ENCODE measurements at regions of chr2 and their contacts with region 1.

Region 1: DNA sequence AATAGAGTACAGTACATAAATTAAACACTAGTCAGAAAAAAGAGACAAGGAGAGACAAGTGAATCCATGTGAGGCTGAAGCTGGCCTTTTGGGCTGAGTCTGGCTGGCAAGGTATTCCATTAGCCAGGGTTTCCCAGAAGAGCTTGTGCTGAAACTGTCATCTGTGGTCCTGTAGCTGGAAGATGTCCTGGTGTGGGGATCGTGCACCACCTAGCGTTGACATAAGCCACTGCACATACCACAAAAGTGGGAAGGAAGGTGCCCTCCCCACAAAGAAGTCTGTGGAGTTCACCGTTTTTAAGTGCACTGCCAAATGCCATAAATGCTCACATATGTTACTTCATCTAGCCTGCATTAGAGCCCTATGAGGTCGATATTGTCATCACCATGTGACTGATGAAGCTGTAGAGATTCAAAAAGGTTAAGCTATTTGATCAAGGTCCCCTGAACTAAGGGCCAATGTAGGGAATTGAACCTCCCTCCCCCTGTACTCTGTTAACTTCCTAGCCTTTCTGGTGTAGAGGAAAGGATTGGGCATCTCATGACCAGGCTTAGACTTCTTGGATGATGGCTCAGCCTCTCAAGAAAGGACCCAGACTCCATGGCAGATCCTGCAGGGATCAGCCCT is 31.9 kb upstream of the GALNT14 start:
- DNase-seq: peak; percentile 60
- ATAC-seq: peak; percentile 94
- H3K4me3 ChIP-seq: no peak overlapping the region
- H3K27ac ChIP-seq: no peak overlapping the region
- H3K4me1 ChIP-seq: no peaks in the 10 kb centered on the region
- H3K27me3 ChIP-seq: peaks cover 2% of the 10 kb centered on the region
- CTCF ChIP-seq: peak; percentile 93

Region 2: GRCh38 chr2:30862054-30862651 is 308.0 kb before region 1 on chr2:
- CTCF ChIA-PET with region 1: interaction called, 3 read pairs
- POLR2A ChIA-PET with region 1: no interaction called
- in situ Hi-C with region 1: no loop called
- intact Hi-C with region 1: loop called (anchors 10 kb)
- DNase-seq: peak; percentile 42
- ATAC-seq: no peak
- H3K4me3 ChIP-seq: no peak overlapping the region
- H3K27ac ChIP-seq: no peak overlapping the region
- H3K4me1 ChIP-seq: no peaks in the 10 kb centered on the region
- H3K27me3 ChIP-seq: no peaks in the 10 kb centered on the region
- CTCF ChIP-seq: peak; percentile 79

Region 3: DNA sequence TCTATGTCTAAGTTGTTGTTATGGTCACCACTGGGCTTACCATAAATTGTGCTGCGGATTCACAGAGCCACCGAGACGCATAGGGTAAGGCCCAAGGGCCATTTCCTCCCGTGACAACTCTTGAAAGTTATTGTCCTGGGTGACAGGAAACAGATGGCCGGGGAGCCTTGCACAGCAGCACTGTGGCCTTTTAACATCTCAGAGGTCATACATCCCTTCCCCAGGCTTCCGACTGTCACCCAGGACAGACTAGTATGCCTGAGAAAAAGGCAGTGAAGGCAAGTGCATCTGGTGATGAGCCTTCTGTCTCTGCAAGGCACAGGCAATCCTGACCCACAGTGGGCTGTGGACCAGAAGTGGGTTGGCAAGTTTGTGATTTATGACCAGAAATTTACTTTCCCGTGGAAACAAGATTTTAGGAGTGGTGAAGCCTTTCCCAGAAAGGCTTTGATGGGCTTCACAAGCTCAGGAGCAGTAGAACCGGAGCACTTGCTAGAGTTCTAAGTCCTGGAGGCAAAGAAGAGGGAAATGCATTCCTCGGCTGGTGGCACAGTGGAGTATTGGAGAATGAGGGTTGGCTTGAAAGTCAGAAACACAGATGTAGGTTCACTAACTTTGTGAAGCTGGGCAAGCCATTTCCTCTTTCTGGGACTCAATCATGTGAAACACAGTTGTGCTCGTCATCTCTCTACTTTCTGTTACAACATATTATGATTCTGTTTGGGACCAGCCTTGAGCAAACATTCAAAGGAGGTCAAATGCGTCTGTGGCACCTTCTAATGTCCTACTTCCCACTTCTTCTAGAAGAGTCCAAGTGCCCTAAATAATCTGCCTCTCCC is 49.2 kb after region 1 on chr2:
- CTCF ChIA-PET with region 1: no interaction called
- POLR2A ChIA-PET with region 1: no interaction called
- in situ Hi-C with region 1: no loop called
- intact Hi-C with region 1: no loop called
- DNase-seq: no peak
- ATAC-seq: no peak
- H3K4me3 ChIP-seq: no peak overlapping the region
- H3K27ac ChIP-seq: no peak overlapping the region
- H3K4me1 ChIP-seq: no peaks in the 10 kb centered on the region
- H3K27me3 ChIP-seq: peaks cover 17% of the 10 kb centered on the region
- CTCF ChIP-seq: no peak

Region 4: GRCh38 chr2:31333527-31334183 is 163.5 kb after region 1 on chr2:
- CTCF ChIA-PET with region 1: no interaction called
- POLR2A ChIA-PET with region 1: no interaction called
- in situ Hi-C with region 1: no loop called
- intact Hi-C with region 1: loop called (anchors 5 kb)
- DNase-seq: peak; percentile 66
- ATAC-seq: peak; percentile 93
- H3K4me3 ChIP-seq: no peak overlapping the region
- H3K27ac ChIP-seq: no peak overlapping the region
- H3K4me1 ChIP-seq: no peaks in the 10 kb centered on the region
- H3K27me3 ChIP-seq: no peaks in the 10 kb centered on the region; the same call in none of the 2 replicates
- CTCF ChIP-seq: peak; percentile 91

Region 5: DNA sequence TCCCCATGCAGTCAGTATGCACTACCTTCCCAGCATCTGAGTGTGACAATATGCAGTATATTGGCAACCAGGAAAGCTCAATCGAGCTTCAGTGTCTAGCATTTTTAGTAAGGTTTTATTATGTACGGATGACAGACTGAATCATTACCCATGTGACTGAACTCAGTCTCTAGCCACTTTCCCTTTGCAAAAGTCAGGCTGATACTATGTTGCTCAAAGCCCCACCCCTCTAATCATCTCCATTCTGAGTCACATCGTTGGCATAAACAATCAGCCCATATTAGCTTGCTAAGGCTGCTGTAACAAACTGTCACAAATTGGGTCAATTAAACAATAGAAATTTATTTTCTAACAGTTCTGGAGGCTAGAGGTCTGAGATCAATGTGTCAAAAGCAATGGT is 436.3 kb after region 1 on chr2:
- CTCF ChIA-PET with region 1: no interaction called
- POLR2A ChIA-PET with region 1: no interaction called
- in situ Hi-C with region 1: no loop called
- intact Hi-C with region 1: no loop called
- DNase-seq: no peak
- ATAC-seq: no peak
- H3K4me3 ChIP-seq: no peak overlapping the region
- H3K27ac ChIP-seq: no peak overlapping the region
- H3K4me1 ChIP-seq: no peaks in the 10 kb centered on the region
- H3K27me3 ChIP-seq: no peaks in the 10 kb centered on the region
- CTCF ChIP-seq: no peak

Measured in Panc1 (cell line).